ENCODE measurements at regions of chr12 and their contacts with region 1.

Region 1: GRCh38 chr12:13924286-13924685 is 57.1 kb downstream of the GRIN2B start:
- DNase-seq: no peak
- ATAC-seq: no peak
- H3K4me3 ChIP-seq: no peak overlapping the region
- H3K27ac ChIP-seq: no peak overlapping the region
- H3K4me1 ChIP-seq: no peaks in the 10 kb centered on the region
- H3K27me3 ChIP-seq: no peaks in the 10 kb centered on the region
- CTCF ChIP-seq: no peak

Region 2: GRCh38 chr12:13727707-13728195 is 196.5 kb before region 1 on chr12:
- intact Hi-C with region 1: loop called in 1 of 3 experiments (anchors 10 kb)
- DNase-seq: no peak
- ATAC-seq: no peak
- H3K4me3 ChIP-seq: no peak overlapping the region
- H3K27ac ChIP-seq: no peak overlapping the region
- H3K4me1 ChIP-seq: no peaks in the 10 kb centered on the region
- H3K27me3 ChIP-seq: no peaks in the 10 kb centered on the region
- CTCF ChIP-seq: no peak

Measured in pancreas (tissue), 10 donors.